Psoas muscle (tissue), 8 donors: ENCODE measurements at regions of chr16 and their contacts with region 1.

Region 1: GRCh38 chr16:19907161-19907992 is 22.7 kb upstream of the GPRC5B start:
- DNase-seq: peak; percentile 49 to 67
- ATAC-seq: peak; percentile 74 to 89 (median 84)
- H3K4me3 ChIP-seq: no peak overlapping the region
- H3K27ac ChIP-seq: no peak overlapping the region
- H3K4me1 ChIP-seq: no peaks in the 10 kb centered on the region
- H3K27me3 ChIP-seq: peaks cover 0 to 18% (median 0%) of the 10 kb centered on the region in 3 donors
- CTCF ChIP-seq: peak; percentile 89

Region 2: DNA sequence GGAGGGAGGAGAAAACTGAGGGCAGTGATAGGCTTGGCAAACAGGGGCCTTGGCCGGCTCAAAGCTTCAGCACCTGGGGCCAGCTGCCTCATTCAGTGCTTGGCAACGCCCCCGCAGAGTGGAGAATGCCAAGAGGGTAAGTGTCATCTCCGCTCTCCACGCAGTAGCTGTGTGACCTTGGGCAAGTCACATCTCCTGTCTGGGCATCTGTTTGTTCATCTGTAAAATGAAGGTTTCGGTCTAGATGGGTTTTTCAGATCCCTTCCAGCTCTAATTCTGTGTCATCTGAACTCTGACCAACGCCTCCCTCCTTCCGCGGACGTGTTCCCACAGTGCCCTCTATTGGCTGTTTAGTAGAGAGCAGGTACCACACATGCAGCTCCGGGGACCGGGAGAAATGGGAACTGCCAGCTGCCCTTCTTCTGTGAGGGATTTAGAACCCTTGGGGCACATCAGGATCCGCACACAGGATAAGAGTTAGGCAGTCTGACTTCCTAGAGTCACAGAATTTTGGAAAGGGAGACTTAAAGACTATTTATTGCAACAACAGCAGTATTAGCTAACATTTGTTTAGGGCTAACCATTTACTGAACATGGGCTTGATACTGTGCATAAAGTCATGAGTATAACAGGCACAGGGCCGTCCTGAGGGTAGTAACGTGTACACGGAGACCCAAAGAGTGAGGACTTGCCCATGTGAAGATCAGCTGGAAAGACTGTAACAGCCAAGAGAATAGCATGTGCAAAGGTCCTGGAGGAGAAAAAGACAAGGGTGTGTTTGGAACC is 393.1 kb after region 1 on chr16:
- intact Hi-C with region 1: loop called in 1 of 2 experiments (anchors 10 kb)
- DNase-seq: peak in 1 of 2 donors; percentile 13
- ATAC-seq: no peak
- H3K4me3 ChIP-seq: no peak overlapping the region
- H3K27ac ChIP-seq: no peak overlapping the region
- H3K4me1 ChIP-seq: no peaks in the 10 kb centered on the region
- H3K27me3 ChIP-seq: no peaks in the 10 kb centered on the region
- CTCF ChIP-seq: peak; percentile 39